HEK293 (cell line): ENCODE measurements at regions of chrX and their contacts with region 1.

Region 1: GRCh38 chrX:70422851-70423341 is at the start of gene GDPD2:
- H3K4me3 ChIP-seq: no peak within 1 kb of the TSS
- H3K27ac ChIP-seq: no peak within 1 kb of the TSS
- H3K4me1 ChIP-seq: no peaks in the 10 kb centered on the region
- CTCF ChIP-seq: peak; percentile 75

Region 2: GRCh38 chrX:70433848-70434351 is 11.0 kb after region 1 on chrX:
- CTCF ChIA-PET with region 1: interaction called, 11 read pairs
- POLR2A ChIA-PET with region 1: interaction called, 4 read pairs
- H3K4me3 ChIP-seq: peak overlapping the region; percentile 48
- H3K27ac ChIP-seq: peak overlapping the region; percentile 25; the same call in 1 of the 2 replicates
- H3K4me1 ChIP-seq: peaks cover 2% of the 10 kb centered on the region; the same call in 1 of the 2 replicates
- CTCF ChIP-seq: peak; percentile 92